ENCODE measurements at regions of chr10 and their contacts with region 1.

Region 1: DNA sequence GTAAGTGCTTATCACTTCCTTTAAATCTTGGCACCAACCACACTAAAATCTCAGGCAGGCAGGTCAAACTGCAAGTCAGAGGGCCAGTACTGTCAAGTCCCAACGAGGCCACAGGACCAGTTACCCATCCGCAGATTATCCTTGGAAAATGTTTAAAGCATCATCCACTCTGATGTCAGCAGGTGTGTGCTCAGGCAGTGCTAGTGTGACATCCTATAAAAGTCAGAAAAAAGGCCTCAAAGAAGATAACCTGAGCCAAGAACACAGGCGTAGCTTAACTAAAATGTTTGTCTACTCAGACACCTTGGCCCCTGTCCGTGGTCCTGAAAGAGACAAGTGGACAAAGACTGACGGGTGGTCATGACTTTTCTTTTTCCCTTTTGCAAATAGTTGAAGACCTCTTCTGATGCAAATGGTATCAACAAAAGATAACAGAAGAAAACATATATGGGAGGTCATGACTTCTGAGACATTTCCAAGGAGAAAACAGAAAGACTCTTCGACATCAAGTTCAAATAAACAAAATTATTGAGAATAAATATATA is 309.3 kb downstream of the KCNMA1 start:
- DNase-seq: peak in 1 of 5 donors; percentile 31
- ATAC-seq: no peak
- H3K4me3 ChIP-seq: no peak overlapping the region
- H3K27ac ChIP-seq: no peak overlapping the region
- H3K4me1 ChIP-seq: no peaks in the 10 kb centered on the region
- H3K27me3 ChIP-seq: no peaks in the 10 kb centered on the region
- CTCF ChIP-seq: no peak
- POLR2A ChIP-seq: no peak

Region 2: GRCh38 chr10:77263700-77264099 is 64.6 kb before region 1 on chr10:
- intact Hi-C with region 1: loop called in 1 of 10 experiments (anchors 2 kb)
- DNase-seq: no peak
- ATAC-seq: no peak
- H3K4me3 ChIP-seq: no peak overlapping the region
- H3K27ac ChIP-seq: no peak overlapping the region
- H3K4me1 ChIP-seq: peaks cover 0 to 9% (median 0%) of the 10 kb centered on the region in 12 donors
- H3K27me3 ChIP-seq: no peaks in the 10 kb centered on the region
- CTCF ChIP-seq: no peak
- POLR2A ChIP-seq: no peak